Breast epithelium (tissue), 4 donors: ENCODE measurements at regions of chr3 and their contacts with region 1.

Region 1: GRCh38 chr3:141816958-141817357 is 53.8 kb downstream of the GRK7 start:
- DNase-seq: no peak
- H3K4me3 ChIP-seq: no peak overlapping the region
- H3K27ac ChIP-seq: no peak overlapping the region
- H3K4me1 ChIP-seq: no peaks in the 10 kb centered on the region
- H3K27me3 ChIP-seq: no peaks in the 10 kb centered on the region
- CTCF ChIP-seq: no peak
- POLR2A ChIP-seq: no peak

Region 2: DNA sequence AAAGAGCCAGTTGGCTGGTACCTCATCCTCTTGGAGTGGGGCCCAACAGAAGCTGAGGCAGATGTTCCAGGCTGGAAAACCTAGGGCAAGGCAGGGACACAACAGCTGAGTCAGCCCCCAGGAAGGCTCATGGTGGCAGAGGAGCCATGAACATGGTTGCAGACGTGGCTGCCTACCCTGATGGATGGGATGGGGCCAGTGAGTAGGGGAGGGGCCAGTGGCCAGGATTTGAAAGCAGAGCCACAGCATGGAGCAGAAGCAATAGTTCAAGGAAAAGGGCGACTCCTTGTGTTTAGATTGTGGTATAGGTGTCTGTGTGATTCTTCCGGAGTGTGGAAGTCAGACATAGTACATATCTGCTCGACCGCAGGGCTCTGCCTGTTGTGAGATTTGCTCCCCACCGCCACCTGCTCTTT is 561.1 kb before region 1 on chr3:
- intact Hi-C with region 1: no loop called
- DNase-seq: no peak
- H3K4me3 ChIP-seq: no peak overlapping the region
- H3K27ac ChIP-seq: no peak overlapping the region
- H3K4me1 ChIP-seq: no peaks in the 10 kb centered on the region
- H3K27me3 ChIP-seq: no peaks in the 10 kb centered on the region
- CTCF ChIP-seq: no peak
- POLR2A ChIP-seq: no peak

Region 3: GRCh38 chr3:142857056-142857455 is 1040.1 kb after region 1 on chr3:
- intact Hi-C with region 1: loop called (anchors 5 kb)
- DNase-seq: no peak
- H3K4me3 ChIP-seq: no peak overlapping the region
- H3K27ac ChIP-seq: no peak overlapping the region
- H3K4me1 ChIP-seq: no peaks in the 10 kb centered on the region
- H3K27me3 ChIP-seq: peaks cover 0 to 6% of the 10 kb centered on the region in 2 donors
- CTCF ChIP-seq: peak in 1 of 3 donors; percentile 25
- POLR2A ChIP-seq: no peak